CD8-positive, alpha-beta T cell (primary cell): ENCODE measurements at regions of chr3 and their contacts with region 1.

Region 1: DNA sequence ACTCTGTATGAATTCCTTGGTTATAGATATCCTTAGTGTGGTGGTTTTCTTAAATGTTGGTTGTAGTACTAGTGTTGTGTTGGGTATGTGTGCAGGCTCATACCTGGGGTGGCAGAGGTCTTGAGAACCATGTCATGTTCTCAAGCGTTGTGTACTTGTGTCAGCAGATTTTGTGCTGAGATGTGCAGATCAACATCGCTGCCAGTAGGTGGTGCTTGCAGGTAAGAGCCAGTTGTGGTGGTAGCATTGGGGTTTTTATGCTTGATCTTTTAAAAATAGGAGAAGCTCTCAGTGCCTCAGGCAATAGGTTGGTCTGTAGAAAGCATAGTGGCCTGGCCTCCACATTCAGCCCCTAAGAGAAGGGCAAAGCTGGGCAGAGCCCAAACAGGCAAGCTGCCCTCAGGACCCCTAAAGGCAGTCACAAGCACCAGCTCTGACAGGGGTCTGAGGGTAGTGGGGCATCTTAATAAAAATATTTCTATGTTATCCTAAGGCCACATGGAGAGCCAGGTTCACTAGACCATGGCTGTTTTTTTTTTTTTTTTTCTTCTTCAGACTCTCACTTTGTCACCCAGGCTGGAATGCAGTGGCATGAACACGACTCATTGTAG is 164.0 kb downstream of the IL20RB start:
- DNase-seq: peak in 2 of 9 experiments; percentile 6 to 28
- ATAC-seq: no peak
- H3K4me3 ChIP-seq: no peak overlapping the region
- H3K4me3 Mint-ChIP-seq: no peak overlapping the region
- H3K27ac ChIP-seq: no peak overlapping the region
- H3K27ac Mint-ChIP-seq: no peak overlapping the region
- H3K4me1 ChIP-seq: no peaks in the 10 kb centered on the region
- H3K4me1 Mint-ChIP-seq: no peaks in the 10 kb centered on the region
- H3K27me3 ChIP-seq: no peaks in the 10 kb centered on the region
- H3K27me3 Mint-ChIP-seq: peaks cover 12% of the 10 kb centered on the region
- CTCF ChIP-seq: peak; percentile 35

Region 2: DNA sequence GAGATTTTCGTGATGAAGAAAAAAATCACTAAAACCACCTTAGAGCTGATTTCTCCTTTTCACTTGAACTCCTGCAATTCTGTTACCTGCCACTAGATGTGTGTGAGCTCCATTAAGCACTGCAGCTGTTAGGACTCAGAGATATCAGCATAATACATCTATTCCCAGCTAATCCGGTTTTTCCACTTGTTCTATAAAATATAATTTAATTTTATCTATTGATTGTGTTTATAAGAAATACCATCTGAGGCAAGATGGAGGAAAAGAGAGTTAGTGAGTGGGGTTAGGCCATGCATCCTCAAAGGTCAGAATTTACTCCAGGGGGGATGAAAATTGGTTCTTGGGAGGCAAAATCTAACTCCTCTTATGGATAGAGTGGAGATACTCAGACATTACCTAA is 11.3 kb before region 1 on chr3:
- CTCF ChIA-PET with region 1: interaction called, 21 read pairs
- POLR2A ChIA-PET with region 1: no interaction called
- intact Hi-C with region 1: no loop called
- DNase-seq: peak in 2 of 9 experiments; percentile 6 to 10
- ATAC-seq: no peak
- H3K4me3 ChIP-seq: no peak overlapping the region
- H3K4me3 Mint-ChIP-seq: no peak overlapping the region
- H3K27ac ChIP-seq: no peak overlapping the region
- H3K27ac Mint-ChIP-seq: no peak overlapping the region
- H3K4me1 ChIP-seq: no peaks in the 10 kb centered on the region
- H3K4me1 Mint-ChIP-seq: no peaks in the 10 kb centered on the region
- H3K27me3 ChIP-seq: no peaks in the 10 kb centered on the region
- H3K27me3 Mint-ChIP-seq: peaks cover 12% of the 10 kb centered on the region
- CTCF ChIP-seq: peak; percentile 70

Region 3: GRCh38 chr3:137360531-137361201 is 238.9 kb after region 1 on chr3:
- CTCF ChIA-PET with region 1: no interaction called
- POLR2A ChIA-PET with region 1: no interaction called
- intact Hi-C with region 1: no loop called
- DNase-seq: no peak
- ATAC-seq: no peak
- H3K4me3 ChIP-seq: no peak overlapping the region
- H3K4me3 Mint-ChIP-seq: no peak overlapping the region
- H3K27ac ChIP-seq: no peak overlapping the region
- H3K27ac Mint-ChIP-seq: no peak overlapping the region
- H3K4me1 ChIP-seq: no peaks in the 10 kb centered on the region
- H3K4me1 Mint-ChIP-seq: no peaks in the 10 kb centered on the region
- H3K27me3 ChIP-seq: no peaks in the 10 kb centered on the region
- H3K27me3 Mint-ChIP-seq: no peaks in the 10 kb centered on the region
- CTCF ChIP-seq: no peak